CD4-positive, alpha-beta T cell (primary cell): ENCODE measurements at regions of chr2 and their contacts with region 1.

Region 1: GRCh38 chr2:225650041-225650440 is 250.5 kb downstream of the NYAP2 start:
- DNase-seq: no peak
- ATAC-seq: no peak
- H3K4me3 ChIP-seq: no peak overlapping the region
- H3K4me3 Mint-ChIP-seq: no peak overlapping the region
- H3K27ac ChIP-seq: no peak overlapping the region
- H3K27ac Mint-ChIP-seq: no peak overlapping the region
- H3K4me1 ChIP-seq: no peaks in the 10 kb centered on the region
- H3K4me1 Mint-ChIP-seq: no peaks in the 10 kb centered on the region
- H3K27me3 ChIP-seq: peaks cover 0 to 3% of the 10 kb centered on the region in 2 experiments
- H3K27me3 Mint-ChIP-seq: peaks cover 11% of the 10 kb centered on the region
- CTCF ChIP-seq: no peak

Region 2: DNA sequence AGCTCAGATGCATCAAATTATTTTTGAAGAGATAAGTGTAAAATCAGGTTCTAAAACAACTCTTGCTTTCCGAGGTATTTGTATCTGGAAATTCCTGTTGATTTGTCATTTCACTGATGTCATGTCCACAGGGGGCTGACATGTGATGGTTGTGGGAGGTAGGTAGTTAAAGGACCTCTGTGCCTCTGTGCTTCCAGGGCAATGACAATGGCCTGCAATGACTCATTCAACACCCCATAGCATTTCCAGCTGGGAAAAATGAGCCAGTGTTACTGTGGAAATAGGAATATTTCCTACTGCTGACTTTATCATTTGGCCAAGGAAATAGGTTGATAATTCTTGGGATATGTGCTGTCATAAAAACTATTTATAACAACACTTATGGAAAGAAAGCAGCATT is 847.6 kb before region 1 on chr2:
- CTCF ChIA-PET with region 1: no interaction called
- POLR2A ChIA-PET with region 1: no interaction called
- intact Hi-C with region 1: loop called in 1 of 2 experiments (anchors 10 kb)
- DNase-seq: no peak
- ATAC-seq: no peak
- H3K4me3 ChIP-seq: no peak overlapping the region
- H3K4me3 Mint-ChIP-seq: no peak overlapping the region
- H3K27ac ChIP-seq: no peak overlapping the region
- H3K27ac Mint-ChIP-seq: no peak overlapping the region
- H3K4me1 ChIP-seq: no peaks in the 10 kb centered on the region
- H3K4me1 Mint-ChIP-seq: no peaks in the 10 kb centered on the region
- H3K27me3 ChIP-seq: no peaks in the 10 kb centered on the region
- H3K27me3 Mint-ChIP-seq: no peaks in the 10 kb centered on the region
- CTCF ChIP-seq: no peak